Naive thymus-derived CD4-positive, alpha-beta T cell (primary cell): ENCODE measurements at regions of chr16 and their contacts with region 1.

Region 1: GRCh38 chr16:25111403-25112166 is at the start of gene LCMT1:
- DNase-seq: peak; percentile 68 to 96 (median 94)
- ATAC-seq: peak; percentile 93
- H3K4me3 ChIP-seq: peak within 1 kb of the TSS; percentile 90
- H3K4me3 Mint-ChIP-seq: peak within 1 kb of the TSS; percentile 89 to 99 (median 92)
- H3K27ac ChIP-seq: peak within 1 kb of the TSS; percentile 70
- H3K27ac Mint-ChIP-seq: peak within 1 kb of the TSS; percentile 62 to 98 (median 89)
- H3K4me1 ChIP-seq: peaks cover 12 to 17% of the 10 kb centered on the region in 2 donors
- H3K4me1 Mint-ChIP-seq: peaks cover 44 to 80% (median 64%) of the 10 kb centered on the region in 7 donors
- H3K27me3 ChIP-seq: no peaks in the 10 kb centered on the region
- H3K27me3 Mint-ChIP-seq: no peaks in the 10 kb centered on the region
- total RNA-seq, gene LCMT1: 30.2 to 36.9 (median 33.0) TPM

Region 2: GRCh38 chr16:24516900-24517669 is 594.5 kb before region 1 on chr16:
- CTCF ChIA-PET with region 1: no interaction called
- POLR2A ChIA-PET with region 1: no interaction called
- intact Hi-C with region 1: loop called in 1 of 2 experiments (anchors 5 kb)
- DNase-seq: peak; percentile 46 to 75 (median 68)
- ATAC-seq: peak; percentile 91
- H3K4me3 ChIP-seq: no peak overlapping the region
- H3K4me3 Mint-ChIP-seq: peak overlapping the region in 8 of 10 donors; percentile 14 to 71 (median 44)
- H3K27ac ChIP-seq: no peak overlapping the region
- H3K27ac Mint-ChIP-seq: peak overlapping the region in 3 of 9 donors; percentile 1 to 88 (median 5)
- H3K4me1 ChIP-seq: no peaks in the 10 kb centered on the region
- H3K4me1 Mint-ChIP-seq: peaks cover 4 to 14% (median 6%) of the 10 kb centered on the region in 7 donors
- H3K27me3 ChIP-seq: no peaks in the 10 kb centered on the region
- H3K27me3 Mint-ChIP-seq: peaks cover 0 to 7% (median 0%) of the 10 kb centered on the region in 5 donors

Region 3: DNA sequence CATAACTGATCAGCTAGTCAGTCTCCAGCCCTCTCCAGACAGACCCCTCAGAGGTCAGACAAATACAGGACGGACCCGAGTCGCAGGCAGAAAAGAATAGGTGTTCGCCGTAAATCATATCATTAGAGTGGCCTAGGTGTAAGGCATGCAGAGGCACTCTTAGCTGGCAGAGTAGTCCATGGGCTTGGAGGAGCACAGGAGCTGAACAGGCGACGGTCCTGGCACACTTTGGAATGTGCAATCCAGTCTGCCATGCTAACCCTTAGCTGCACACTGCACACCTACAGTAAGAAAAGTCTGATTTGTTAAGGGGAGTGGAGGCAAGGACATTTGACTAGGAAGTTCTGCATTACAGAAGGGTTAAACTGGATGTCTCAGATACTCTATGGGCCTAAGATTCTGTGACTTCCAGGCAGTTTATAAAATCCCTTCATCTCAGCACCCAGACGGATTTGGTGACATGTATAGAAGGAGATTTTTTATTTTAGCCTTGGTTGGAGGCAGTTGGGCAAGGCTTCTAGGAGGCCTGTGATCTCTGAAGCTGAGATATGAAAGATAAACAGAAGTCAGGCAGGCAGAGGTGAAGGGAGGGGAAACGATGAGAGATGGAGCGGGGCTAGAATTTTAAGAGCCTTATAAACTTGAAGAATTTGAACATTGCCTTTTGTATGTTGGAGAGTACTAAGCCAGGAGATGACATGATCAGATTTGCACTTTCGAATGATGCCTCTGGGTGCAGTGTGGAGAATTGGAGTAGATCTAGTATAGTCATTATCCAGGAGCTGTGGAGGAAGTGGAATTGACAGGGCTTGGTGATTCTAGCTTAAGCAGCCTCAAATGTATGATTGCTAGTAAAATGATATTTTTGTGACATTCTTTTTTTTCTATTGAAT is 300.4 kb before region 1 on chr16:
- CTCF ChIA-PET with region 1: no interaction called
- POLR2A ChIA-PET with region 1: no interaction called
- intact Hi-C with region 1: loop called in 1 of 2 experiments (anchors 5 kb)
- DNase-seq: no peak
- ATAC-seq: no peak
- H3K4me3 ChIP-seq: no peak overlapping the region
- H3K4me3 Mint-ChIP-seq: no peak overlapping the region
- H3K27ac ChIP-seq: no peak overlapping the region
- H3K27ac Mint-ChIP-seq: peak overlapping the region in 5 of 9 donors; percentile 3 to 28 (median 18)
- H3K4me1 ChIP-seq: no peaks in the 10 kb centered on the region
- H3K4me1 Mint-ChIP-seq: no peaks in the 10 kb centered on the region
- H3K27me3 ChIP-seq: no peaks in the 10 kb centered on the region
- H3K27me3 Mint-ChIP-seq: no peaks in the 10 kb centered on the region

Region 4: GRCh38 chr16:25014500-25015147 is 97.0 kb before region 1 on chr16:
- CTCF ChIA-PET with region 1: interaction called, 7 read pairs
- POLR2A ChIA-PET with region 1: interaction called, 15 read pairs
- intact Hi-C with region 1: loop called (anchors 1 kb)
- DNase-seq: peak in 7 of 9 donors; percentile 16 to 39 (median 23)
- ATAC-seq: peak; percentile 26
- H3K4me3 ChIP-seq: peak overlapping the region; percentile 81
- H3K4me3 Mint-ChIP-seq: peak overlapping the region; percentile 83 to 97 (median 94)
- H3K27ac ChIP-seq: peak overlapping the region; percentile 94
- H3K27ac Mint-ChIP-seq: peak overlapping the region; percentile 87 to 98 (median 95)
- H3K4me1 ChIP-seq: peaks cover 24 to 50% of the 10 kb centered on the region in 2 donors
- H3K4me1 Mint-ChIP-seq: peaks cover 59 to 88% (median 76%) of the 10 kb centered on the region in 7 donors
- H3K27me3 ChIP-seq: no peaks in the 10 kb centered on the region
- H3K27me3 Mint-ChIP-seq: no peaks in the 10 kb centered on the region

Region 5: DNA sequence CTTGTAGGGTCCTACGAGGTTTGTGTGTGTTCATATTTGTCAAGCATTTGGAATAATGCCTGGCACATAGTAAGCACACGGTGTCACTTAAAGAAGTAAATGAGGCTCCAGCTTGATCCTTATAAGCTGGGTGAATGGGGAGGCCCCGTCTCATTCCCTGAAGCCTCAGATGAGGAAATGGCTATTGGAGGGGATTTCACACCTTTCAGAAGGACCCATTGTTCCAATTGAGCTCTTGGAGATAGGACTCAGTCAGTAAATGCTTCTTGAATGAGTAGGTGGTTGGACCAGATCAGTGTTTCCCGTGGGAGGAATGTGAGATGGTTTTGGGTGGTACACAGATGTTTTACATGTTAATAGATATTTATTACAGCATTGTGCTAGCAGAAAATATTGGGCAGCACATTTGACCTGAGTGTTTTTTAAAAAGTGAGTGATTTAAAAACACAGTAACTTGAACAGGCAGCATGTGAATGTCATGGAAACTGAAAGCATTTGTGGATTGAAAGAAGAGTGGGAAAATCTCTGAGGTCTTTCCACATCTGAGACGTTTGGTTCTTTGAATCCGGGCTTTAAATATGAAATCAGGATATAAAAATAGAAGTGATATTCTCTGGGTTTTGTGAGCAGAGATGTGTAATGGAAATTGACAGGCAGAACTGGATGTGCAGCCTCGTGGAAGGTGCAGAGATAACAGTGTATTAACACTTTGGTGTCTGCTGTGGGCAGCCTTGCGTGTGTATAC is 60.0 kb before region 1 on chr16:
- CTCF ChIA-PET with region 1: interaction called, 118 read pairs
- POLR2A ChIA-PET with region 1: interaction called, 157 read pairs
- intact Hi-C with region 1: loop called (anchors 1 kb)
- DNase-seq: peak in 1 of 9 donors; percentile 21
- ATAC-seq: no peak
- H3K4me3 ChIP-seq: peak overlapping the region; percentile 25
- H3K4me3 Mint-ChIP-seq: peak overlapping the region; percentile 45 to 85 (median 70)
- H3K27ac ChIP-seq: peak overlapping the region; percentile 39
- H3K27ac Mint-ChIP-seq: peak overlapping the region; percentile 43 to 99 (median 96)
- H3K4me1 ChIP-seq: peaks cover 23 to 36% of the 10 kb centered on the region in 2 donors
- H3K4me1 Mint-ChIP-seq: peaks cover 30 to 60% (median 54%) of the 10 kb centered on the region in 7 donors
- H3K27me3 ChIP-seq: no peaks in the 10 kb centered on the region
- H3K27me3 Mint-ChIP-seq: no peaks in the 10 kb centered on the region

Region 6: DNA sequence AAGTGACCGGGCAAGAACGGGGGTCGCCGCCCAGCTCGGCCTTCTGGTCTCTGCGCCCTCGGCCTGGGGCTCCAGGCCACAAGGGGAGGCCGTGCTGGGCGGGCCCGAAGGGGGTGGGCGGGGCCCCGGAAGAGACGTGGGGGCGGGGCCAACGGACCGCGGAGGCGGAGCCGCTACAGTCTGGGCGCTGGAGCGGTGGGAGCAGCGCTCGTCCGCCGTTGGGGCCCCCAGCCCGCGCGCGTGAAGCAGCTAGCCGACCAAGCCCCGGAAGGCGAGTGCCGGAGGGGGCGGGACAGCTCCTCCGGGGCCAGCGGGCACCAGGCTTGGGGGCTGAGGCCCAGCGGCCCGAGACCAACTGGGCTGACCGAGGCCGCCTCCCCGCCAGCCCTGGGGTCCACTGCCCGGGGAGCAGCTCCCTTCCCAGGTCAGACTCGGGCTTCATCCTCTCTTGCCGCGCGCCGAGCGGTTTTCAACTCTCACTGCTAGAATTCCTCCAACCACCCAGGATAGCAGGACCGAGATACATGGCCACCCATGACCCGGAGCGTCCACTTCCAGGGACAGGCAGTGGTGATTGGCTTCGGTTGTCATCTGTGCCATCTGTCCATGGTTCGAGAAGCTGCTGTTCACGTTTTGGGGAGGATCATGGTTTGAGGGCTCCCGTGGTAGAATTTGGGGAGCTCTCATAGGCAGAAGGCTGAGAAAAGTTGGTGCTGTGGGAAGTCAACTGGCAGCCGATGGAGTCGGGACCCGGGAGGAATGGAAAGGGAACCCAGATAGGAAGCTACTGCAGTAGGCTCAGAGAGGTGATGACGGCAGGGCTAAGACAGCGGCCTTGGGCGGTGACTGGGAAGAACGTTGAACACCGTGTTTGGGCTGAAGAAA is 44.6 kb before region 1 on chr16:
- CTCF ChIA-PET with region 1: interaction called, 118 read pairs
- POLR2A ChIA-PET with region 1: interaction called, 157 read pairs
- intact Hi-C with region 1: loop called (anchors 1 kb)
- DNase-seq: peak; percentile 66 to 86 (median 76)
- ATAC-seq: peak; percentile 98
- H3K4me3 ChIP-seq: peak overlapping the region; percentile 85
- H3K4me3 Mint-ChIP-seq: peak overlapping the region; percentile 82 to 99 (median 92)
- H3K27ac ChIP-seq: peak overlapping the region; percentile 76
- H3K27ac Mint-ChIP-seq: peak overlapping the region; percentile 85 to 100 (median 93)
- H3K4me1 ChIP-seq: peaks cover 17 to 33% of the 10 kb centered on the region in 2 donors
- H3K4me1 Mint-ChIP-seq: peaks cover 30 to 72% (median 52%) of the 10 kb centered on the region in 7 donors
- H3K27me3 ChIP-seq: no peaks in the 10 kb centered on the region
- H3K27me3 Mint-ChIP-seq: peaks cover 0 to 2% (median 0%) of the 10 kb centered on the region in 5 donors

Region 7: GRCh38 chr16:25257504-25257955 is 145.9 kb after region 1 on chr16 and contains the start of gene ZKSCAN2:
- CTCF ChIA-PET with region 1: no interaction called
- POLR2A ChIA-PET with region 1: no interaction called
- intact Hi-C with region 1: loop called (anchors 1 kb)
- DNase-seq: peak; percentile 66 to 90 (median 76)
- ATAC-seq: peak; percentile 89
- H3K4me3 ChIP-seq: peak within 1 kb of the TSS; percentile 90
- H3K4me3 Mint-ChIP-seq: peak within 1 kb of the TSS; percentile 90 to 98 (median 96)
- H3K27ac ChIP-seq: peak within 1 kb of the TSS; percentile 93
- H3K27ac Mint-ChIP-seq: peak within 1 kb of the TSS; percentile 95 to 98 (median 96)
- H3K4me1 ChIP-seq: peaks cover 16 to 39% of the 10 kb centered on the region in 2 donors
- H3K4me1 Mint-ChIP-seq: peaks cover 48 to 74% (median 66%) of the 10 kb centered on the region in 7 donors
- H3K27me3 ChIP-seq: no peaks in the 10 kb centered on the region
- H3K27me3 Mint-ChIP-seq: no peaks in the 10 kb centered on the region
- total RNA-seq, gene ZKSCAN2: 4.7 to 7.0 (median 5.2) TPM